Heart right ventricle (tissue), 16 donors: ENCODE measurements at regions of chr10 and their contacts with region 1.

Region 1: GRCh38 chr10:31759799-31760626 is 168.6 kb downstream of the ARHGAP12 start:
- DNase-seq: peak; percentile 95 to 97
- ATAC-seq: peak; percentile 93 to 97 (median 96)
- H3K4me3 ChIP-seq: peak overlapping the region; percentile 72 to 95 (median 88)
- H3K27ac ChIP-seq: peak overlapping the region; percentile 89 to 99 (median 98)
- H3K4me1 ChIP-seq: peaks cover 2 to 45% (median 30%) of the 10 kb centered on the region in 9 donors
- H3K27me3 ChIP-seq: no peaks in the 10 kb centered on the region
- CTCF ChIP-seq: peak in 1 of 9 donors; percentile 9

Region 2: DNA sequence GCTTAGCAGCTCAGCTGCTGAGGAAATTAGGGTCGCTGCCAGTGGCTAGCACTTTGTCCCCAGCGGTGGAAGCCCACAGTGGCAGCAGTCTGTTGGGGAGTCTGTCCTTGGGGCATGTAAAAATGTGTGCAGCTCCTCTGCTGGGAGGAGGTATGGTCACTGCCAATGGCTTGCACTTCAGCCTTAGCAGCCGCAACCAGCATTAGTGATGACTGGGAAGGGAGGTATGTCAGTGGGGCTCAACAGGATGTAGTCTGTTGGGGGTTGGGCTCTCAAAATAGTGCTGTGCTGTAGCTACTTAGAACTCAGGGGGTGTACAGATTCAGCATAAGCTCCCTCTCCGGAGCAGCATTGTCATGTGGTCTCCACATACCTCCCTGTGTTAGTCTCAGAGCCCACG is 251.1 kb before region 1 on chr10:
- intact Hi-C with region 1: loop called in 1 of 10 experiments (anchors 10 kb)
- DNase-seq: no peak
- ATAC-seq: no peak
- H3K4me3 ChIP-seq: no peak overlapping the region
- H3K27ac ChIP-seq: no peak overlapping the region
- H3K4me1 ChIP-seq: no peaks in the 10 kb centered on the region
- H3K27me3 ChIP-seq: no peaks in the 10 kb centered on the region
- CTCF ChIP-seq: no peak

Region 3: GRCh38 chr10:31526681-31527080 is 233.3 kb before region 1 on chr10:
- intact Hi-C with region 1: loop called in 2 of 10 experiments (anchors 10 kb)
- DNase-seq: no peak
- ATAC-seq: no peak
- H3K4me3 ChIP-seq: no peak overlapping the region
- H3K27ac ChIP-seq: peak overlapping the region in 5 of 10 donors; percentile 31 to 49 (median 36)
- H3K4me1 ChIP-seq: peaks cover 0 to 31% (median 7%) of the 10 kb centered on the region in 9 donors
- H3K27me3 ChIP-seq: no peaks in the 10 kb centered on the region
- CTCF ChIP-seq: no peak

Region 4: DNA sequence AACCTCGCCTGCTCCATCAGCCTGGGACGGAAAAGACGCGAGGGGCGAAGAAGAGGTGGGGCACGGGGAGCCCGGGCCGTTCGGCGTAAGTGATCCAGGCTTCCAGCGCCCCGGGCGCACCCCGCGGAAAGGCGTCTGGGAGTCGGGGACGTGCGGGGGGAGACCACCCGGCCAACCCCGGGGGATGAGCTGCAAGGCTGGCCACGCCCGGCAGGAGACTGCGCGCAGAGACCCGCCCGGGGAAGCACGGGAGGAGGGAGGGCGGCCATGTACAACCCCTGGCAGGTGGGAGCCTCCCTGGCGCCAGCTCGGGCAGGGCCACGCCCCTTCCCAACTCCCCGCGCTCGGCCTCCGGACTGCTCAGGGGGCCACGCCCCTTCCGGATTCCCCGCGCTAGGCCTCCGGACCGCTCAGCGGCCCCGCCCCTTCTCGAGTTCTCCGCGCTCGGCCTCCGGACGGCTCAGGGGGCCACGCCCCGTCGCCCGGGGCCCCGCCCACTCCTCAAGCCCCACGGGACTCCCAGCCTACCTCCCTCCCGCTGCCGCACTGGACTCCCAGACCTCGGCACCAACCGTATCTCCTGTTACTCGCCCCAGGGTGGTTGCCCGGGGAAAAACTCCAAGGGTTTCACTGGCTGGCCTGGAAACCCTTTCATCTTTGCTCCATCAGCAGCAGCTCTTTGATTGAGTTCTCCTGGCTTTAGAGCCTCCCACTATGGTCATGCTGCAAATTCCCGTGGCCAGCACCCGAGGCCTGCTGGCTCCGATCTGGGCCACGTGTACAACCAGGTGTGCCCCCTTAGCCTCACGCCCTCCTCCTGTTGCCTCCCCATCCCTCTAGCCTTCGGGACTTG is 156.6 kb before region 1 on chr10:
- intact Hi-C with region 1: loop called in 2 of 10 experiments (anchors 5 to 10 kb)
- DNase-seq: peak; percentile 96 to 97
- ATAC-seq: peak; percentile 94 to 98 (median 96)
- H3K4me3 ChIP-seq: peak overlapping the region; percentile 48 to 76 (median 64)
- H3K27ac ChIP-seq: peak overlapping the region; percentile 74 to 95 (median 90)
- H3K4me1 ChIP-seq: peaks cover 0 to 46% (median 17%) of the 10 kb centered on the region in 9 donors
- H3K27me3 ChIP-seq: no peaks in the 10 kb centered on the region
- CTCF ChIP-seq: peak in 1 of 9 donors; percentile 13

Region 5: DNA sequence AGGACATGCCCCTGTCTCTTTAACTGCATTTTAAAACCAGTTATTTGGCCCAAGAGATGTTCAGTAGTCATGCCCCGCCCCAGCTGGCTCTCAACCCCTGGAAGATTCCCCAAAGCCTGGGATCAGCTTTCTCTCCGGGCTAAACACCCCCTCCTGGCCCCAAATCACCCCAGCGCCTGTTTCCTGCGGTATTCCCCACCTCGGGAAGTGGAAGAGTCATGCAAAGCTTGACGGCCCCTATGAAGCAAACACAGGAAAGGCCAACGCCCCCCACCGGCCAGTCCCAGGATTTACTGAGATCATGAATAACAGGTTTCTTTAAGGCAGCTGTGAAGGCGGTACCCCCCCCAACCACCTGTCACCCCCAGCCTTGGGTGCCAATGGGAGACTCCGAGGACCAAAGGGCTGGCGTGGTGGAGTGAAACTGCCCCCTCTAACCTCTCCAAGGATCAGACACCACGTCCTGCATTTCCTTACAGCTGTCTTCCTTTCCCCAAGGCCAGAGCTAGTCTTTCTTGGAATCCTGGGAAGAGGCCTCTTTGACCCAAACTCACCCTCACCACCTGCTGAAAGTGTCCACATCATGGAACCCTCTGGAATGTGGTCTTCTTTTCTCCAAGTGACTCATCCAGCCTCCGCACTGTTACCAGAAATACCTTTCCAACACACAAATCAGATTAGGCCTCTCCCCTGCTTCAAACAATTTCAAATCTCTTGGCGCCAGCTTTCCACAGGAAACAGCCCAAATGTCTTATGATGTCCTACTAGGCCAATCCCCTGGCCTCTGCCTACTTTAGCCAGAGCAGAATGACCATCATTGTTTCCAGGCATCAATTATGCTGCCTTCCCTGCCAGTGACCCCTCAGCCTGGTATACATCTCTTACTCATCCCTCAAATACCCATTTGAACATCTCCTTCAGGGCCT is 139.5 kb before region 1 on chr10:
- intact Hi-C with region 1: loop called in 3 of 10 experiments (anchors 10 kb)
- DNase-seq: peak; percentile 70 to 87
- ATAC-seq: peak; percentile 47 to 79 (median 65)
- H3K4me3 ChIP-seq: no peak overlapping the region
- H3K27ac ChIP-seq: peak overlapping the region in 9 of 10 donors; percentile 24 to 79 (median 64)
- H3K4me1 ChIP-seq: peaks cover 8 to 61% (median 37%) of the 10 kb centered on the region in 9 donors
- H3K27me3 ChIP-seq: no peaks in the 10 kb centered on the region
- CTCF ChIP-seq: peak in 8 of 9 donors; percentile 16 to 58 (median 42)

Region 6: DNA sequence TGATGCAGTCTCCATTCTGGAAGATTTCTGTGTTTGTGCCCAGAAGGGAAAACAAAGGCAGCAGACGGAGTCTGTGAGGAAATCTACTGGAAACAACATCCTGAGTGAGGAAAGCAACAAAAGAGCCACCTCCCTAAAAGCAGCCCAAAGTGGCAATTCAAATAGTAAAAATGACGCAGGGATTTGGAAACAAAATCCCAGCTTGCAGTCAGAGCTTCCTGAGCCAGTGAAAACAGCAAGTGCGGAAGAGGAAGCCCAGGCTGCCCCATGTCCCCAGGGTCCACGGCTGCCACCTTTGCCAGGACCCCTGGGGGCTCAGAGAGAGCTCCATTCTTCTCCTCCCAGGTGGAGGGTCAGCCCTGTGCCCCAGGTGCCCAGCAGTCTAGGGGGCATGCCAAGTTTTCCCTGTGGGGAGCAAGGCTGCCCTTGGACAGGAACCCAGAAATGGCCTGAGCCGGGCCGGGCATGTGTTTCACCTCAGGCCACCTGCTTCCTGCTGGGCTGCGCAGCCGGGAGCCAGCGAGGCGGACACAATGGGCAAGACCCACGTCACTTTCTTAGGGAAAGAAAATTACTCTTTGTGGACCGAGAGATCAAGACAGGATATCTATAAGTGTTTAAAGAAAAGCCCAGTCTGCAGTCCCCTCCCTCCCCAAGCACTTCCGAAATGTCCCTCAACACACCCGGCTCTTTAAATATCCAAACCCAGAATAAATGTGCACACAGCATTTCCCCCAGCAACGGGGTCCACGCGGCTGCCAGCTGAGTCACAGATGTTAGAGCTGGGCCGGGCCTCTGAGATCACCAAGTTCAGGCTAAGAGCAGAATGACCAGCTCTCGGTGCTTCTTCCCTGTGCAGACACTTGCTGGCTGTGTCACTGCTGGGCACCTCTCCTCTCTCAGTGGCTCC is 62.5 kb before region 1 on chr10:
- intact Hi-C with region 1: loop called in 1 of 10 experiments (anchors 5 kb)
- DNase-seq: peak; percentile 85 to 90
- ATAC-seq: peak; percentile 80 to 91 (median 88)
- H3K4me3 ChIP-seq: peak overlapping the region in 8 of 10 donors; percentile 4 to 38 (median 28)
- H3K27ac ChIP-seq: peak overlapping the region; percentile 91 to 99 (median 96)
- H3K4me1 ChIP-seq: peaks cover 33 to 90% (median 69%) of the 10 kb centered on the region in 9 donors
- H3K27me3 ChIP-seq: no peaks in the 10 kb centered on the region
- CTCF ChIP-seq: no peak

Region 7: DNA sequence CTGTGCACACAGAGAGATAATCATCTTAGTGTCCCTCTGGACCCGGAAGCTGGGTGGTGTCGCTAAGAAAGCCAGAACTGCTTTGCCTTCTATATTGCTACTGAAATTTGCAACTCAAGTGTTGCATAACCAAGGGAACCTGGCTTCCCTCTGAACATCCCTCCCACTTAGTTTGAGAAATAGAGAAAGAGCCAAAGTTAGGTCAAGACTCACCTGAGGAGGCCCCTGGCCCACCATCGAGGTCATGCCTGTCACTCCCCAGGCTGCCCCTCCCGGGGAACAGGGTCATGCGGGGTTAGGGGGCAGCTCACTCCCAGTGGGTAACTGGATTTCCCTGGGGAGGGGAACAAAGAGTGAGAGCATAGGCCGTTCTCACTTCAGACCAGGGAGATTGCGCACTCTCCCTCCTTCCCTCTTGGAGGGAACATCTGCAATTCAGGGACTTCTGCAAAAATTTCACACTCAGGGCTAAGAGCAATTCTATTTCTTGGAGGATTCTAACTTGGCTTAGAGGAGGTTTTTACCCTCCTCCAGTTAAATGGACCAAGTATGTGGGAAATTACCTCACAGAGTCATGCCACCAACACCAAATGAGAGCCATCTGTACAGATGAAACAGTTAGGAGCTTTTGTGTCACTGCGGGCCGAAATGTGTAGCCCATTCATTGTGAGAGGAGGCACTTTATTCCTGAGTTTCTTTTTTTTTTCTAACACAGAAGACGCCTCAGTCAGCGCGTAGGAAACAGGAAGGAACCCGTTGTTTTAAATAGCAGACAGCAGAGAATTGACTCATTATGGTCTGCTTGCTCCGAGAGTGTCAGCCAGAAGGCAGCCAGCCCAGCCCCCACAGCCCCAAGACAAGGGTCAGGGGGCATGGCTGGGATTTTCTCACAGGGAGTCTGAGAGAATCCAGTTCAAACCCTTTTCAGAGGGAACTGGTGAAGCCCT is 52.6 kb before region 1 on chr10:
- intact Hi-C with region 1: loop called in 7 of 10 experiments (anchors 5 kb)
- DNase-seq: peak; percentile 72 to 83
- ATAC-seq: peak; percentile 82 to 95 (median 89)
- H3K4me3 ChIP-seq: peak overlapping the region in 6 of 10 donors; percentile 26 to 36 (median 34)
- H3K27ac ChIP-seq: peak overlapping the region; percentile 62 to 97 (median 88)
- H3K4me1 ChIP-seq: peaks cover 15 to 64% (median 50%) of the 10 kb centered on the region in 9 donors
- H3K27me3 ChIP-seq: no peaks in the 10 kb centered on the region
- CTCF ChIP-seq: no peak